Dorsolateral prefrontal cortex (tissue), 120 donors: ENCODE measurements at regions of chr22 and their contacts with region 1.

Region 1: DNA sequence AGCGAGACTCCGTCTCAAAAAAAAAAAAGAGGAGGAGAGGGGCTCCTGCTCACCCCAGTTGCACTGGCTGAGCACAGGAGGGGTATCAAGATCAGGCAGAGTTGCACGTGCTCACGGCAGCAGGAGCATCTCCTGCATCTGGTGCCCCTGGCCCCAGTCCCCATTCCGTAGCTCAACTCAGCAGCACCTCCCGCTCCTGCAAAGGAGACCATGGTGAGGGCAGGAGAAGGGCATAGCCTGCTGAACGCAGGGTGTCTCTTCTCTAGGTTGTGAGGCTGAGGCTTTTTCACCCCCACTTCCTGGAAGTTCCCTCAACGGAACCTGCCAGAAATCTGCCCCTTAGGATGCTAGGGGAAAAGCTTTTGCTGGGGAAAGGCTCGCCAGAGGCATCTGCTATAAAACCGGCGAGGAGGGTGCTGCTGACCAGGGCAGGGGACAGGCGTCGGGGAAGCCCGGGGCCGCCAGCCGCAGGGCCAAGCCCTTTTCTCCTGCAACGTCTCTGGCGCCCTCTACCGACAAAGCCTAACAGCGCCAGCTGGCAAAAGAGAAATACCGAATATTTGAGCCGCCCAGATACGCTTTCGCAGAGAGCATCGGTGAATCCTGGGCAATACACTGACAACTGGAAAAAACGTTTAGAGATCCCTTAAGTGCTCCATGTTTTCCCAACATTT is 1.0 kb upstream of the PPP6R2 start:
- DNase-seq: peak; percentile 81 to 89 (median 87)
- H3K4me3 ChIP-seq: peak overlapping the region; percentile 59 to 96 (median 82)
- H3K27ac ChIP-seq: peak overlapping the region in 55 of 59 donors; percentile 12 to 92 (median 72)
- H3K27me3 ChIP-seq: no peaks in the 10 kb centered on the region
- CTCF ChIP-seq: peak; percentile 88 to 99 (median 95)

Region 2: GRCh38 chr22:50250555-50251476 is 91.3 kb before region 1 on chr22 and contains the start of gene HDAC10:
- intact Hi-C with region 1: loop called in 1 of 2 experiments (anchors 5 kb)
- DNase-seq: peak in 1 of 10 donors; percentile 42
- H3K4me3 ChIP-seq: peak within 1 kb of the TSS; percentile 36 to 78 (median 67)
- H3K27ac ChIP-seq: peak within 1 kb of the TSS in 47 of 59 donors; percentile 2 to 83 (median 63)
- H3K27me3 ChIP-seq: no peaks in the 10 kb centered on the region
- CTCF ChIP-seq: peak in 1 of 56 donors; percentile 8
- total RNA-seq, gene HDAC10: 20.2 to 75.9 (median 39.0) TPM

Region 3: GRCh38 chr22:50326959-50327710 is 15.0 kb before region 1 on chr22 and contains the start of gene DENND6B:
- intact Hi-C with region 1: no loop called
- DNase-seq: peak; percentile 61 to 86 (median 76)
- H3K4me3 ChIP-seq: peak within 1 kb of the TSS; percentile 47 to 97 (median 87)
- H3K27ac ChIP-seq: peak within 1 kb of the TSS; percentile 31 to 97 (median 93)
- H3K27me3 ChIP-seq: no peaks in the 10 kb centered on the region
- CTCF ChIP-seq: peak in 55 of 56 donors; percentile 17 to 80 (median 58)
- total RNA-seq, gene DENND6B: 12.7 to 56.5 (median 38.0) TPM

Region 4: GRCh38 chr22:50417411-50418210 is 75.5 kb after region 1 on chr22:
- intact Hi-C with region 1: loop called in 1 of 2 experiments (anchors 10 kb)
- DNase-seq: no peak
- H3K4me3 ChIP-seq: no peak overlapping the region
- H3K27ac ChIP-seq: peak overlapping the region in 54 of 59 donors; percentile 2 to 89 (median 72)
- H3K27me3 ChIP-seq: no peaks in the 10 kb centered on the region
- CTCF ChIP-seq: no peak

Region 5: DNA sequence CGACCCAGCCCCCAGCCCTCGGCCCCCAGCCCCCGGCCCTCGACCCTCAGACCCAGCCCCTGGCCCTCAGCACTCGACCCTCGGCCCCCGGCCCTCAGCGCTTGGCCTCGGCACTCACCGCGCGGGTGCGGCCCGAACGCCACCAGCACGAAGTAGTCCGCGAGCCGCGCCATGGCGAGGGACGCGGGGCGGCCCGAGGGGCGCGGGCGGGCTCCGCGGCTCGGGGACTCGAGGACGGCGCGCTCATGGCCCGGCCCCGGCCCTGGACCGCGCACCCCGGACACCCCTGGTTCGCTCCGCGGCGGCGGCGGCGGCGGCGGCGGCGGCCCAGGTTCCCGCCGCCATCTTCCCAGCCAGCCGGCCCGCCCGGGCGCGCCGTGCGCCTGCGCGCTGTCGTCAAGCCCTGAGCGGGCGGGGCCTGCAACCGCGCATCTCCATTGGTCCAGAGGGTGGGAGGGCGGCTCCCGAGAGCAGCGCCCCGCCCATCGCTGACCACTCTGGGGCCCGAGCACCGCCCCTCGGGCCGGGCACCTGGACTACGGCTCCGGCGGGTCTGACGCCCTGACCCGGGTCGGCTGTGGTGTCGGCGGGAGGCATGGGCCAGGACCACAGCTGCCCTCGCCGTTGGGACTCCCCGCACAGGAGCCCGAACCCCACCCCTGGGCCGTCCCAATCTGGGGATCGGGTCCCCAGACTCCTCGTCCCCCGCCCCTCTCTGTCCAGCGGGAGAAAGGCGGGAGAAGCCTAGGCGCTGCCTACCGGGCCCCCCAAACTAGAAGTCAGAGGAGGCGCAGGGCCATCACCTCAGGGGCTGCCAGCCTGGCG is 132.8 kb after region 1 on chr22 and contains the start of gene SBF1:
- intact Hi-C with region 1: loop called in 1 of 2 experiments (anchors 10 kb)
- DNase-seq: peak; percentile 84 to 96 (median 92)
- H3K4me3 ChIP-seq: peak within 1 kb of the TSS; percentile 53 to 97 (median 86)
- H3K27ac ChIP-seq: peak within 1 kb of the TSS in 56 of 59 donors; percentile 16 to 95 (median 75)
- H3K27me3 ChIP-seq: peaks cover 0 to 13% (median 0%) of the 10 kb centered on the region in 45 donors
- CTCF ChIP-seq: peak in 8 of 56 donors; percentile 8 to 32 (median 14)
- total RNA-seq, gene SBF1: 163 to 302 (median 210) TPM